ENCODE measurements at regions of chr9 and their contacts with region 1.

Region 1: DNA sequence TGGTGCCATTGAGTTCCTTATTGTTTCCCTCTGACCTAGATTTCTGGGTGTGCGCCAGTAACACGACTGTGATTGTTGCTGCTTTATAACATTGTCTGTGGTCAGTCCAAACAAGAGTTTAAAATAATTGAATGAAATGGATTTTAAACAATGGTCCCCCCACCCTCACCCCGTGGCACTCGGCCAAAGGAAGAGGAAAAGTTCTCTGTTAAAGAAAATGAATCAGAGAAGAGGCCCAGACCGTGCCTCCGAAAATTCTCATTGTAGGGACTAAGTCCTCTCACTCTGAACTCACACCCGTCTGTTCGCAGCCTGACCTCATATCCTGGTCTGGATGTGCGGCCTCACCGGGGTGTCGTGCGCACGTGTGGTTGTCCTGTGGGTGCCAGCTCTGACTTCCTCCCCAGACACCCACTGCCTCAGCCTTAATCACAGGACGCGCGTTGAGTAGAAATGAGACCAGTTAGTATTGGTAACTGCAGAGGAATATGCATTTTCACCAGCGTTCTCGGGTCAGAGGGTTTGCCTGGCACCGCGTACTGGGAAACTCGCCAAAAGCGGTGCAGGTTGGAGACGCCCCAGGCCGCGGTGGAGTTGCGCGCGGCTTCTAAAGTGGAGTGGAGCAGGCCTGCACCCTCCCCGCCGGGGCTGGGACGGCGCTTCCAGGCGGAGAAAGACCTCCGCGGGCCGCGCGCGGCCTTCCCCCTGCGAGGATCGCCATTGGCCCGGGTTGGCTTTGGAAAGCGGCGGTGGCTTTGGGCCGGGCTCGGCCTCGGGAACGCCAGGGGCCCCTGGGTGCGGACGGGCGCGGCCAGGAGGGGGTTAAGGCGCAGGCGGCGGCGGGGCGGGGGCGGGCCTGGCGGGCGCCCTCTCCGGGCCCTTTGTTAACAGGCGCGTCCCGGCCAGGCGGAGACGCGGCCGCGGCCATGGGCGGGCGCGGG is at the start of gene ABL1:
- DNase-seq: peak; percentile 70 to 85 (median 76)
- H3K4me3 ChIP-seq: peak within 1 kb of the TSS; percentile 52
- H3K27ac ChIP-seq: peak within 1 kb of the TSS; percentile 86 to 92
- H3K4me1 ChIP-seq: peaks cover 10% of the 10 kb centered on the region
- H3K27me3 ChIP-seq: no peaks in the 10 kb centered on the region
- CTCF ChIP-seq: no peak
- EP300 ChIP-seq: no peak
- POLR2A ChIP-seq: no peak
- total RNA-seq, gene ABL1: 39.4 to 112 (median 92.5) TPM

Region 2: DNA sequence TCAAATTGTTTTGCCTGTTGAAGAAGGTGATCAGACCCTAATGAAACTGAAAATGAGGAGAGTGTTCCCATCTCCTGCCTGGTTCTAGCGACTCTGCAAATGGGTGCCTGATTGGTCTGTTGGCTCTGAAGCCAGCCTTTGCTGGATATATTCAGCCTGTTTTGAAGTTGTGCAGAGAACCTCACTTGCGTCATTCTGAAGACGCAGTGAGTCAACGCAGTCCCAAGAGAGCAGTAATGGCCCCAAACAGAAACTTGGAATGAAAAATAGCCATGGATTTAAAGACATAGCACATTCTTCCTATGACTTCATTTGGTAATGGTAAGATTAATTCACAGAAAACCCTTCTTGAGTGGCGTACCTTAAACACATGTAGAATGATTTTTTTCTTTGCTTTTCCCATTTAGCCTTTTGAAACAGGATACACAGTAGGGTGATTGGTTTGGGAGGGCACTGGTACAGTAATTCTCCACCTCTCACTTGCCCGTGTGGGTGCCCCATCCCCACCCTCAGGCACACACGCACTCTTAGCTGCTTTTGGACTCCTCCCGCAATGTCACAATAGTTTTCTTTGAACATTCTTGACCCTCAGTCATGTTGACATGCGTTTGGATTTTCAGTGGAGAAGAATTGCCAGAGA is 53.7 kb before region 1 on chr9:
- intact Hi-C with region 1: loop called in 3 of 4 experiments (anchors 5 to 10 kb)
- DNase-seq: peak; percentile 74 to 90 (median 79)
- H3K4me3 ChIP-seq: peak overlapping the region; percentile 41
- H3K27ac ChIP-seq: peak overlapping the region; percentile 72 to 96
- H3K4me1 ChIP-seq: peaks cover 14% of the 10 kb centered on the region
- H3K27me3 ChIP-seq: no peaks in the 10 kb centered on the region
- CTCF ChIP-seq: no peak
- EP300 ChIP-seq: peak; percentile 81
- POLR2A ChIP-seq: peak; percentile 89